A673 (cell line): ENCODE measurements at regions of chr11 and their contacts with region 1.

Region 1: GRCh38 chr11:130434521-130435223 is 6.3 kb upstream of the ADAMTS8 start:
- DNase-seq: peak; percentile 91
- H3K4me3 ChIP-seq: peak overlapping the region; percentile 59
- H3K27ac ChIP-seq: no peak overlapping the region
- H3K4me1 ChIP-seq: peaks cover 5% of the 10 kb centered on the region
- H3K27me3 ChIP-seq: peaks cover 19% of the 10 kb centered on the region
- CTCF ChIP-seq: peak; percentile 92

Region 2: GRCh38 chr11:130213143-130213978 is 221.3 kb before region 1 on chr11:
- CTCF ChIA-PET with region 1: interaction called, 23 read pairs
- POLR2A ChIA-PET with region 1: no interaction called
- intact Hi-C with region 1: loop called (anchors 1 kb)
- DNase-seq: peak; percentile 75
- H3K4me3 ChIP-seq: no peak overlapping the region
- H3K27ac ChIP-seq: no peak overlapping the region
- H3K4me1 ChIP-seq: no peaks in the 10 kb centered on the region
- H3K27me3 ChIP-seq: no peaks in the 10 kb centered on the region
- CTCF ChIP-seq: peak; percentile 99

Region 3: GRCh38 chr11:130574740-130575139 is 140.1 kb after region 1 on chr11:
- CTCF ChIA-PET with region 1: no interaction called
- POLR2A ChIA-PET with region 1: no interaction called
- intact Hi-C with region 1: no loop called
- DNase-seq: no peak
- H3K4me3 ChIP-seq: no peak overlapping the region
- H3K27ac ChIP-seq: no peak overlapping the region
- H3K4me1 ChIP-seq: no peaks in the 10 kb centered on the region
- H3K27me3 ChIP-seq: no peaks in the 10 kb centered on the region
- CTCF ChIP-seq: no peak

Region 4: GRCh38 chr11:130827451-130828377 is 393.0 kb after region 1 on chr11:
- CTCF ChIA-PET with region 1: interaction called, 20 read pairs
- POLR2A ChIA-PET with region 1: no interaction called
- intact Hi-C with region 1: loop called (anchors 1 kb)
- DNase-seq: peak; percentile 87
- H3K4me3 ChIP-seq: no peak overlapping the region
- H3K27ac ChIP-seq: no peak overlapping the region
- H3K4me1 ChIP-seq: peaks cover 4% of the 10 kb centered on the region
- H3K27me3 ChIP-seq: no peaks in the 10 kb centered on the region
- CTCF ChIP-seq: peak; percentile 69

Region 5: DNA sequence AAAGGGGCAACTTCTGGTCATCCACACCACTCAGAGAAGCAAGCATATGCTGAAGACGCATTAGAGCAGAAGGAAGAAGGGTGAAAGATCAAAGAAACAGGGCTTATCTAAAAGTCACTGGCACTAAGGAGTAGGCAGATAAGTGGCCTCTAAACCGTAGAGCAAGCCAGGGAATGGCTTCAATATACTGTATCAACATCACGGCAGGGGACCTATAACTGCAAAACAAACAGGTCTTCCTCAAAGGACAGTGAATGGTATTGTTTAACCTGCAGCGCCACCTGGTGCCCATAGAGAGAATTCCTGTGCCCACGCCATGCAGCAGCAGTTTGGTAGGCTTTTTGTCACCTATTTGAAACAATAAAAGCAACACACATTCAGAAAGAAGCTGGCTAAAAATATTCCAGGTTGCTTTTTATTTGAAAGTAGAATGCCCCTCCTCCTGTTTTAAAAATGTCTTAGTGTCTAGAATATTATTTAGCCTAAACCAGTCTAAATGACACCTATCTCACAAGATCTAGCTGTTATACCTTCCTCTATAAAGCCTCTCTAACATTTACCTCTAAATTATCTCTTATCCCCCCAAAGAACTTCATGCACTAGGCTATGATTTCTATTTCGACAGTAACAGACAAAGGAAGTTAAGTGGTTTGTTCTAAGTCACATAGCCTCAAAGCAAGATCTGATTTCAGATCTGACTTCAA is 459.8 kb after region 1 on chr11:
- CTCF ChIA-PET with region 1: interaction called, 6 read pairs
- POLR2A ChIA-PET with region 1: no interaction called
- intact Hi-C with region 1: loop called (anchors 1 kb)
- DNase-seq: peak; percentile 90
- H3K4me3 ChIP-seq: no peak overlapping the region
- H3K27ac ChIP-seq: no peak overlapping the region
- H3K4me1 ChIP-seq: no peaks in the 10 kb centered on the region
- H3K27me3 ChIP-seq: no peaks in the 10 kb centered on the region
- CTCF ChIP-seq: peak; percentile 96

Region 6: DNA sequence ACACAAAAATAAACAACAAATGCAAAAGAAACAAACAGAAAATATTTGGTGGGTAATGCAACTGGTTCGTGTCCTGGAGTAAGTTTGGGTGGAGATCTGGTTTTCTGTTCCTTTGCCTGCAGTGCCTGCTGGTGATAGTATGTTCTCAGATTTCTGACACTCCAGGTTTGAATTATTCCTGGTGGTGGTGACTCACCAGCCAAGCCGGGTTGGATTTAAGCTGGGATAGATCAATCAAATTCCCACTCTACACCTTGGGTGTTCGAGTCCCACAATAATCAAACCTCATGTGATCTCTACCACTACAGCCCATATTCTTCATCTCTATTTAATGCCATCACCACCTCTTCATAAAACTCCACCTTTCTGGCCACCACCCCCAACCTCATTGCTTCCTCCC is 1357.6 kb after region 1 on chr11:
- CTCF ChIA-PET with region 1: no interaction called
- POLR2A ChIA-PET with region 1: no interaction called
- intact Hi-C with region 1: no loop called
- DNase-seq: no peak
- H3K4me3 ChIP-seq: no peak overlapping the region
- H3K27ac ChIP-seq: no peak overlapping the region
- H3K4me1 ChIP-seq: no peaks in the 10 kb centered on the region
- H3K27me3 ChIP-seq: peaks cover 88% of the 10 kb centered on the region
- CTCF ChIP-seq: no peak